Activated B cell treated with CpG ODN at 0.5 μM for 24 hours (primary cell): ENCODE measurements at regions of chr1 and their contacts with region 1.

Region 1: DNA sequence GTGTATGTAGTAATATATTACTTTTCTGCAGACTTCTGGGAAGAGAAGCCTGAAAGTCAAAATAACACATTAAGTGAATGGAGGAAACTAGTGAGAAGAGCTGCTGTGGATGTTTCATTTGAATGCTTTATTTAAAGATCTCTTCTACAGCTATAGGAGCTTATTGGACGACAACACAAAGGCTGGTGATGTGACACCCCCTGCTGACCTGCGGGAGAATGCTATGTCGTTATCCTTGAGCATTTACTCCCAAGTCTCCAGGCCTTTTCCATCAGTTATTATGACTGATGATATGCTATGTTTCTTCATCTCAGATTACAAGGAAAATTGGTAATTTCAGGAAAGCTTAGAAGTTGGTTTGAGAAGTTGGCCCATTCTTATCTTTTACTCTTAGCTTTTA is 22.3 kb upstream of the PLA2G4A start:
- DNase-seq: no peak
- ATAC-seq: no peak
- H3K4me3 Mint-ChIP-seq: no peak overlapping the region
- H3K27ac Mint-ChIP-seq: no peak overlapping the region
- H3K4me1 Mint-ChIP-seq: no peaks in the 10 kb centered on the region
- H3K27me3 Mint-ChIP-seq: no peaks in the 10 kb centered on the region
- CTCF ChIP-seq: no peak

Region 2: DNA sequence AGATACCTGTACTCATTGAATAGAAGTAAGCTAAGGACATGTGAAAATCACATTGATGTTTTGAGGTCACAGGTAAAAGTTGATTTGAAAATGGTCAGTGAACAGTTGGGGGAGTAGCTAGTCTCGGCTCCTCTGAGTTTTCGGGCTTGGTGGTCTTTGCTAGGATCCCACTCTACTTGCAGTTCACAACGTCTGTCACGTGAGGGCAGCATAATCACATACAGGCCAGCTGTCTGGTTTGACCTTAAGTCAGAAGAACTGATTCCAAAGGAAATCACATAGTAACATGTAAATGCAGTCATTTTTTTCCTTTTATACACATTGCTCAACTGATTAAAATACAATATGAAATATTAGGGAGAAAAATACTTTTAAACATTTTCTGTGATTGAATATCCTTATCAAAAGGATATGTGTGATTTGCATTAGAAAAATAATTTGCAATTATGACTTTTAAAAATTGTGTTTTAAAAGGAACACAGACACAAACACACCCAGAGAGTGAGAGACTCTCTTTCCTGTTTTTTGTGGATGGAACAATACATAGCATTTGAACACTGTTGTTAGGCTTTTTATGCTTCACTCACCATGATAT is 323.7 kb before region 1 on chr1:
- CTCF ChIA-PET with region 1: no interaction called
- POLR2A ChIA-PET with region 1: no interaction called
- intact Hi-C with region 1: loop called (anchors 10 kb)
- DNase-seq: peak; percentile 26
- ATAC-seq: peak; percentile 21
- H3K4me3 Mint-ChIP-seq: no peak overlapping the region
- H3K27ac Mint-ChIP-seq: no peak overlapping the region
- H3K4me1 Mint-ChIP-seq: no peaks in the 10 kb centered on the region
- H3K27me3 Mint-ChIP-seq: no peaks in the 10 kb centered on the region
- CTCF ChIP-seq: no peak